ENCODE measurements at regions of chr21 and their contacts with region 1.

Region 1: DNA sequence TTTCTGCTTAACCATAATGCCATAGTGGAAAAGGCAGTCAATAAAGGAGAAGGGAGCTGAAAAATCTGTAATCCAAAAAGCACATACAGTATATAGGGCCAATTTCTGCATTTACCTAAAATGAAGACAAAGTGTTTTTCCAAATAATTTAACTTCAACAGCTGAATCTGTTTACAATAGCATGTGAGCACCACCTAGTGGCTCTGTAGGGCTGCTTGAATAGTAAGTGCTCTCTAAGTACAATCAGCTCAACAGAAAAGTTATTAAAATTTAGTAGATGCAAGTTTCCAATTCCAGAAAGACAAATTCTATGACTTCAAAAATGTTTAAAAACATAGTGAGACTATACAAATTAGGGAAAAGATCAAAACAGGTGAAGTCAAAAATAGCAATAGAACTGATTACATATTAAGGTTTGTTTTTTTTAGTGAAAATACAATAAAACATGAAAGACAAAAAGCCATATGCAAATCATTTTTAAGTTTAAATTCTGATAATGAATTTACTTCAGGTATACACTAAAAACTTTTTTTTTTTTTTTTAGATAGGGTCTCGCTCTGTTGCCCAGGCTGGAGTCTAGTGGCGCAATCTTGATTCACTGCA is 220.0 kb downstream of the SETD4 start:
- DNase-seq: peak; percentile 83
- H3K4me3 ChIP-seq: no peak overlapping the region
- H3K27ac ChIP-seq: no peak overlapping the region
- H3K4me1 ChIP-seq: no peaks in the 10 kb centered on the region
- H3K27me3 ChIP-seq: no peaks in the 10 kb centered on the region

Region 2: GRCh38 chr21:35051287-35051818 is 788.9 kb before region 1 on chr21:
- in situ Hi-C with region 1: loop called (anchors 25 kb)
- DNase-seq: peak; percentile 97
- H3K4me3 ChIP-seq: 0 out of 2 replicates have a peak overlapping the region, but pooled peaks have one; percentile 26
- H3K27ac ChIP-seq: peak overlapping the region; percentile 84
- H3K4me1 ChIP-seq: peaks cover 50% of the 10 kb centered on the region
- H3K27me3 ChIP-seq: no peaks in the 10 kb centered on the region

Region 3: GRCh38 chr21:35204850-35205541 is 635.3 kb before region 1 on chr21:
- in situ Hi-C with region 1: loop called (anchors 25 kb)
- DNase-seq: peak; percentile 85
- H3K4me3 ChIP-seq: peak overlapping the region; percentile 51
- H3K27ac ChIP-seq: peak overlapping the region; percentile 86
- H3K4me1 ChIP-seq: peaks cover 51% of the 10 kb centered on the region
- H3K27me3 ChIP-seq: no peaks in the 10 kb centered on the region

Region 4: DNA sequence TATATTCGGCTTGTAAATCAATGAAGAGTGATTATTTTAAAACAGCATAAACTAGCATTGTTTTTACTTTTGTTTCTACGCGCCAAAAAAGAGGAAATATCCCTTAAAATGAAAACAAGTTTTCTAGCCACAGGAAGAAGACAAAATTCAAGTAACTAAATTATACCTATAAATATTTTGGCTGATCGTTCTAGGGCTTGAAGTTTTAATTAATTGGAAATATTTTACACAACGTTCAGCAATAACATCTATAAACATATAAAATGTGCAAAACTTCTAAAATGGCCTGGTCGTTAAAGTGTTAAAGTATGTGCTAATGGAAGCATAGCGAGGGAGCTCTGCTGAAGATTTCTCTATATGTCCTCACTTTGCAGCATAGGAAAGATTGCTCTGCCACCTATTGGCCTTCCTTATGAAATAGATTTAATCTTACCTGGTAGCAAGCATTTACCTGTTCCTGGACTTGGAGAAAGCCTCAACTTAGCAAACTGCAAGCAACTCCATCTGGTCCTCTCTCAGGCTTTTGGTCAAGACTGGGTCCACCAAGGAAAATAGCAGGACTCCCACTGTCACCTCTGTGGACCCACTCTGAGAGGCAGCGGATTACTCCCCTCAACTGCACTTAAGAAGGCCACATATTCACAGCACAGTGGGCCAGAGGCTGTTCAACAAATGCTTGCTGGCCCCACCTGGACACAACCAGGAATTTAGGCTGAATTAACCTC is 439.9 kb before region 1 on chr21:
- in situ Hi-C with region 1: loop called (anchors 25 kb)
- DNase-seq: peak; percentile 66
- H3K4me3 ChIP-seq: no peak overlapping the region
- H3K27ac ChIP-seq: no peak overlapping the region
- H3K4me1 ChIP-seq: peaks cover 32% of the 10 kb centered on the region
- H3K27me3 ChIP-seq: no peaks in the 10 kb centered on the region

Region 5: GRCh38 chr21:36125512-36126222 is 285.4 kb after region 1 on chr21:
- in situ Hi-C with region 1: no loop called
- DNase-seq: peak; percentile 70
- H3K4me3 ChIP-seq: no peak overlapping the region
- H3K27ac ChIP-seq: no peak overlapping the region
- H3K4me1 ChIP-seq: peaks cover 2% of the 10 kb centered on the region; the same call in 1 of the 2 replicates
- H3K27me3 ChIP-seq: no peaks in the 10 kb centered on the region